ENCODE measurements at regions of chr6 and their contacts with region 1.

Region 1: DNA sequence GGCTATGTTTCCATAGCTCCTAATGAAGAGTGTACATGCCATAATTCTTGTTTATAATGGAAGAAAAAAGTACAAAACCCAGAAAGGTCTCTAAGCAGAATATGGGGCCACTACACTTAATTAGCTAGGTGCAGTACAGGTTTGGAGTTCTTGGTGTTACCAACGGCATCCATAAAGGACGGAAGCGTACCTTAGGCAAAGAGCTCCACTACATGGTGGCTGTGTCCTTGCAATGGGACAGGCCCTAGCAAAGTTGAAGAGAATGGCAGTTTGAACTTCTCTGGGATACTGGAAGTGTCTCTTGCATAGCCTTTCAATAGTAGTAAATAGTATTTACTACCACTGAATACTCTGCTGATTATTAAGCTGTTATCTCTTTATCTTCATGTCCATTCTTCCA is 371.7 kb upstream of the MMS22L start:
- DNase-seq: no peak
- H3K4me3 ChIP-seq: no peak overlapping the region
- CTCF ChIP-seq: no peak

Region 2: GRCh38 chr6:97697456-97697855 is 42.8 kb after region 1 on chr6:
- in situ Hi-C with region 1: loop called (anchors 5 kb)
- DNase-seq: peak; percentile 29
- H3K4me3 ChIP-seq: no peak overlapping the region
- CTCF ChIP-seq: no peak

Region 3: GRCh38 chr6:97717086-97717485 is 62.4 kb after region 1 on chr6:
- in situ Hi-C with region 1: no loop called
- DNase-seq: no peak
- H3K4me3 ChIP-seq: no peak overlapping the region
- CTCF ChIP-seq: no peak